ENCODE measurements at regions of chr1 and their contacts with region 1.

Region 1: DNA sequence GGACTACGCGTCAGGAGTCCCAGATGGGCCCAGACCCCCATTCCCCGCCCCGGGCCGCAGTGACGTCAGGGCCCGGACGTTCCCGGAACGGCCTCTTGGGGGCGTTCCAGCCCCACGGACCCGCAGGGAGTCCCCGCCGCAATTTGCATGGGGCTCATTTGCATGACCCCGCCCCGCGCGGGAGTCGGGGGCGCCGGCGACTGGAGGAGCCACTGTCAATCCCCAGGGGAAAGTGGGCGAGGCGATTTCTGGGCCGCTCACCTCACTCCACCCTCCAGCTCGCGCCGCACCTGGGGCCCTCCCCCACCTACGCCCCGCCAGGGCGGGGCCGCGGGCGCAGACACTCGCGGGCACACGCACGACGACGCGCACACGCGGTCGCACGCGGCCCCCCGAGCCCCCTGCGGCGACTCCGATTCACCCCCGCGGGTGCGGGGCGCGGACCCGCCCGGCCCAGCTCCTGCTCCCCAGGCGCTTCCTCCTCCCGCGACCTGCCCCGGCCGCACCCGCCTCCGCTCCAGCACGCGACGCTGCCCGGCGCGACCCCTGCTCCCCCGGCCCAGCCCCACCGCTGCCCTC is 13.2 kb downstream of the AGRN start:
- DNase-seq: peak; percentile 97
- ATAC-seq: peak; percentile 95
- H3K4me3 Mint-ChIP-seq: peak overlapping the region; percentile 33
- H3K27ac Mint-ChIP-seq: no peak overlapping the region
- H3K4me1 Mint-ChIP-seq: peaks cover 5% of the 10 kb centered on the region
- H3K27me3 Mint-ChIP-seq: peaks cover 18% of the 10 kb centered on the region

Region 2: GRCh38 chr1:983799-984473 is 49.2 kb before region 1 on chr1:
- CTCF ChIA-PET with region 1: interaction called, 4 read pairs
- POLR2A ChIA-PET with region 1: no interaction called
- intact Hi-C with region 1: loop called in 1 of 2 experiments (anchors 10 kb)
- DNase-seq: peak; percentile 80
- ATAC-seq: peak; percentile 82
- H3K4me3 Mint-ChIP-seq: no peak overlapping the region
- H3K27ac Mint-ChIP-seq: no peak overlapping the region
- H3K4me1 Mint-ChIP-seq: no peaks in the 10 kb centered on the region
- H3K27me3 Mint-ChIP-seq: peaks cover 18% of the 10 kb centered on the region

Region 3: DNA sequence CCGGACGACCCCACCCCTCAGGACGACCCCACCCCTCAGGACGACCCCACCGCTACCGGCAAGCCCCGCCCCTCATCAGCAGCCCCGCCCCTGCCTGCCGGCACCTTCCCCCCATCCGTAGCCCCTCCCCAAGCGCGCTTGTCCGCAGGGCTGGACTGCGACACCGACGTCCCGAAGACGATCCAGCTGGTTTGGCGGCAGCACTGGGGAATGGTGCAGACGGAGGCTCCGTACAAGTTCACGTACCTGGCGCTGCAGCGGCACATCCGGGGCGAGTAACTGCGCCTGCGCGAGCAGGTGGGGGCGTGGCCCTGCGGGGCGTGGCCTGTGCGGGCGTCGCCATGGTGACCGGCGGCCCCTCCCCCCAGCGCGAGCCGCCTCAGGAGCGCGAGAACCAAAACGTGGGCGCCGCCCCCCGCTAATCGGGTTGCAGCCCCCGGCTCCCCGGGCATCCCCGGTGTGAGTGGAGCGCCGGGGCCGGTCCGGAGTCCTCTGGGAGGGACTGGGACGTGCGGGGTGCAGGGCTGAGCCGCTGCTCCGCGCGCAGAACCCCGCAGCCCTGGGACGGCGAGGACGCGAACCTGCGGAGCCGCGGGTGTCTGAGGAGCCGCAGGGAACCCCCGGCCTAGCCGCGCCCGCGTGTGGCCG is 36.1 kb after region 1 on chr1:
- CTCF ChIA-PET with region 1: interaction called, 4 read pairs
- POLR2A ChIA-PET with region 1: interaction called, 5 read pairs
- intact Hi-C with region 1: loop called in 1 of 2 experiments (anchors 1 kb)
- DNase-seq: peak; percentile 94
- ATAC-seq: peak; percentile 47
- H3K4me3 Mint-ChIP-seq: peak overlapping the region; percentile 71
- H3K27ac Mint-ChIP-seq: no peak overlapping the region
- H3K4me1 Mint-ChIP-seq: peaks cover 11% of the 10 kb centered on the region
- H3K27me3 Mint-ChIP-seq: no peaks in the 10 kb centered on the region

Region 4: GRCh38 chr1:1250786-1251284 is 217.7 kb after region 1 on chr1:
- CTCF ChIA-PET with region 1: interaction called, 5 read pairs
- POLR2A ChIA-PET with region 1: no interaction called
- intact Hi-C with region 1: loop called in 1 of 2 experiments (anchors 2 kb)
- DNase-seq: no peak
- ATAC-seq: peak; percentile 59
- H3K4me3 Mint-ChIP-seq: no peak overlapping the region
- H3K27ac Mint-ChIP-seq: peak overlapping the region; percentile 72
- H3K4me1 Mint-ChIP-seq: peaks cover 15% of the 10 kb centered on the region
- H3K27me3 Mint-ChIP-seq: peaks cover 4% of the 10 kb centered on the region

Region 5: GRCh38 chr1:1260843-1261560 is 227.9 kb after region 1 on chr1:
- CTCF ChIA-PET with region 1: no interaction called
- POLR2A ChIA-PET with region 1: no interaction called
- intact Hi-C with region 1: no loop called
- DNase-seq: no peak
- ATAC-seq: no peak
- H3K4me3 Mint-ChIP-seq: no peak overlapping the region
- H3K27ac Mint-ChIP-seq: no peak overlapping the region
- H3K4me1 Mint-ChIP-seq: no peaks in the 10 kb centered on the region
- H3K27me3 Mint-ChIP-seq: no peaks in the 10 kb centered on the region

Measured in activated CD4-positive, alpha-beta T cell treated with anti-CD3 and anti-CD28 coated beads for 36 hours (primary cell).